PC-9 (cell line): ENCODE measurements at regions of chr17 and their contacts with region 1.

Region 1: GRCh38 chr17:20189302-20189701 is 180.1 kb downstream of the SPECC1 start:
- DNase-seq: peak in 1 of 2 experiments; percentile 49
- H3K4me3 ChIP-seq: no peak overlapping the region
- H3K27ac ChIP-seq: no peak overlapping the region
- H3K4me1 ChIP-seq: peaks cover 12% of the 10 kb centered on the region
- H3K27me3 ChIP-seq: no peaks in the 10 kb centered on the region
- CTCF ChIP-seq: no peak

Region 2: GRCh38 chr17:19728079-19728495 is 461.2 kb before region 1 on chr17:
- CTCF ChIA-PET with region 1: no interaction called
- POLR2A ChIA-PET with region 1: interaction called, 27 read pairs
- intact Hi-C with region 1: no loop called
- DNase-seq: peak; percentile 89 to 95
- H3K4me3 ChIP-seq: no peak overlapping the region
- H3K27ac ChIP-seq: peak overlapping the region; percentile 70
- H3K4me1 ChIP-seq: peaks cover 61% of the 10 kb centered on the region
- H3K27me3 ChIP-seq: no peaks in the 10 kb centered on the region
- CTCF ChIP-seq: no peak

Region 3: DNA sequence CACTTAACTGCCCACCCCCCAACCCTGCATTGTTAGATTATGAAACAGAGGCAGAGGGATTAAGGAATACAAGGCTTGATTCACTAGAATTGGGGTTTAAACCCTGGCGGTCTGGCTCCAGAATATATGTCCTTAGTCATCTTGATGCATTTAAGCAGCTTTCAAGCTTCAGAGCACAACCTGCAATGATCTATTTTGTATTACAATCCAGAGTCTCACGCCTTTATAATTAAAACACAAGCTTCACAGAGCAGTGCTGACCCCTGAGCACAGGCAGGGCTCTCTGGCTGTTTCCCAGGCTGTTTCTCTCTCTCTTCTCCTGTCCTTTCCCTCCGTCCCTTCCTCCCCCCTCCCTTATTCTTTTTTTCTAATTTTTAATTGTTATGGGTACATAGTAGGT is 29.0 kb after region 1 on chr17:
- CTCF ChIA-PET with region 1: no interaction called
- POLR2A ChIA-PET with region 1: no interaction called
- intact Hi-C with region 1: no loop called
- DNase-seq: no peak
- H3K4me3 ChIP-seq: no peak overlapping the region
- H3K27ac ChIP-seq: no peak overlapping the region
- H3K4me1 ChIP-seq: peaks cover 8% of the 10 kb centered on the region
- H3K27me3 ChIP-seq: no peaks in the 10 kb centered on the region
- CTCF ChIP-seq: no peak

Region 4: GRCh38 chr17:20281860-20282259 is 92.6 kb after region 1 on chr17:
- CTCF ChIA-PET with region 1: no interaction called
- POLR2A ChIA-PET with region 1: no interaction called
- intact Hi-C with region 1: no loop called
- DNase-seq: no peak
- H3K4me3 ChIP-seq: no peak overlapping the region
- H3K27ac ChIP-seq: no peak overlapping the region
- H3K4me1 ChIP-seq: no peaks in the 10 kb centered on the region
- H3K27me3 ChIP-seq: no peaks in the 10 kb centered on the region
- CTCF ChIP-seq: no peak